CD4-positive, alpha-beta T cell (primary cell): ENCODE measurements at regions of chr5 and their contacts with region 1.

Region 1: DNA sequence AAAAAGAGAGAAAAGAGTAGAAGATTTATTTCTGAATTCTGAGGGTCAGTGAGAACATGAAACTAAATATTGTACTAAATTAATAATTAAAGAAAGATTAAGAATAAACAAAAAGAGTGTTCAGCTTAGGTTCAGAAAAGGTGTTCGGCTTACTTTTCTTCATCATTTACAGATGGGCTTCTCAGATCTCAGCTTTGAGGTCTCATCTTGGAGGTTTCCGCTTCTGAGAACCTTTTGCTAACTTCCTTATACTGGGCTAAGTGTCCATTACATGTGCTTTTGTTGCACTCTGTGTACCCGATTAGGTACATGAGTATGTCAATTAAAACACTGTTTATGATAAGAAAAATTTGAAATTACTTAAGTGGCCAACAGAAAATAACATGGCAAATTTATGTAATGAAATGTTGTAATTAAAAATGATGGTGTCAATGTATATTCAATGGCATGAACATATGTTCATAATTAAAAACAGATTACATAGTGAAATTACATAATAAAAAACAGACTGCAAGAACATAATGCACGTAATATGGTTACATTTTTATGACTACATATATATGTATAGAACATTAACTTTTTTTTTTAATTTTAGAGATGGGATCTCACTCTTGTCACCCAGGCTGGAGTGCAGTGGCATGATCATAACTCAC is 17.3 kb upstream of the ITGA1 start:
- DNase-seq: no peak
- ATAC-seq: no peak
- H3K4me3 ChIP-seq: no peak overlapping the region
- H3K4me3 Mint-ChIP-seq: no peak overlapping the region
- H3K27ac ChIP-seq: no peak overlapping the region
- H3K27ac Mint-ChIP-seq: no peak overlapping the region
- H3K4me1 ChIP-seq: peaks cover 13% of the 10 kb centered on the region
- H3K4me1 Mint-ChIP-seq: peaks cover 30% of the 10 kb centered on the region
- H3K27me3 ChIP-seq: no peaks in the 10 kb centered on the region
- H3K27me3 Mint-ChIP-seq: peaks cover 4% of the 10 kb centered on the region
- CTCF ChIP-seq: no peak

Region 2: DNA sequence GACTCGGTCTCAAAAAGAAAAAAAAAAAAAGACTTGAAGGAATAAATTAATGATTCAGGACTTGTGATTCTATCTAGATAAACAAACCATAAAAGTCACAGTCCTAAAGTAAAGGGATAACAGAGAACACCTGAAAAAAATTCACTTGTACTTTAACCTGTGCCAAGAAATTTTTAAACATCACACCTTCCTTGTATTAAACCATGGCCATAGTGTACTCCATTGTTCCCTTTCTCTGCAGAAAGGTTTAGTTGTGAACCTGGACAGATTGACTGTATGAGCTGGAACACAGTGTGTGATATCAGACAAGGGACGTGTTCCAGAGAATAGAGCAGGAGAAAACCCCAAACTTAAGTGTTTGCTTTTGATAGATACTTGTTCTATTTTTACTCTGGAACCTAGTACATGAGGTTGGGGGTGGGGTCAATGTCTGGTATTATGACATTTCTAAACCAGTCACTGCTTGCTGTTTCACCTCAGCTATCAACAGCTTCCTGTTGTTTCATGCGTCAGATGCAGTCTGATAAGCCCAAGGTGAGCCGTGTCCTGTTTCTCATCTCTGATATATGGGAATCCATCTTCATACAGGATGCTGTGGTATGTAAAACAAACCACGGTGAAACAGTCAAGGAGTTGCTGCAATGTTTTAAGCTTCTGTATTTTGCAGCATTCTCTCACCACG is 45.2 kb before region 1 on chr5:
- CTCF ChIA-PET with region 1: no interaction called
- POLR2A ChIA-PET with region 1: interaction called, 4 read pairs
- intact Hi-C with region 1: loop called in 1 of 2 experiments (anchors 1 kb)
- DNase-seq: peak in 13 of 14 experiments; percentile 36 to 95 (median 67)
- ATAC-seq: peak; percentile 95
- H3K4me3 ChIP-seq: peak overlapping the region; percentile 15
- H3K4me3 Mint-ChIP-seq: peak overlapping the region; percentile 85
- H3K27ac ChIP-seq: peak overlapping the region; percentile 47 to 63
- H3K27ac Mint-ChIP-seq: peak overlapping the region; percentile 81
- H3K4me1 ChIP-seq: peaks cover 32% of the 10 kb centered on the region
- H3K4me1 Mint-ChIP-seq: peaks cover 57% of the 10 kb centered on the region
- H3K27me3 ChIP-seq: no peaks in the 10 kb centered on the region
- H3K27me3 Mint-ChIP-seq: no peaks in the 10 kb centered on the region
- CTCF ChIP-seq: no peak